ENCODE measurements at regions of chr2 and their contacts with region 1.

Region 1: DNA sequence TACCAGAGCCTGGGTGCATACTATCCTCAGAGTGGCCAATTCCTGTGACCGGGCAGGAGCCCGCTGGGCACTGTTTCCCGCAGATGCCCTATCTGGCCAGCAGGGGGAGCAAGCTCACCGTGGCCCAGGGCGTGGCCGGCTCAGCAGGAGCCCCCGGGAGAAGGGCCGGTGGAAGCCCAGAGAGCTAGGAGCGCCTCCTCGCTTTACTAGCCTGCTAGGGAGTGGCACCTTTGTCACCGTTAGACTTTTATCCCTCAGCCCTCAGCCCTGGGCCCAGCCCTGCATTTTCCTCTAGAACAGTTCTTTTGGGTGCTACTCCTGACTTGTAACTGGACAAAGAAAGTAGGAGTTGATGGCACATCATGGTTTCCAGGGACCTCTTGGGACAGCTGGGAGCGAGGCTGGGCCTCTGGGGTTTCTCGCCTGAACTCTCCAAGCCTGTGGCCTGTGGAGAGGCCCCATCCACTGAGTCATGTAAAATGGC is 24.0 kb downstream of the TMEM177 start:
- DNase-seq: no peak
- H3K4me3 ChIP-seq: no peak overlapping the region
- CTCF ChIP-seq: peak; percentile 99

Region 2: GRCh38 chr2:119617455-119617854 is 85.5 kb before region 1 on chr2:
- CTCF ChIA-PET with region 1: no interaction called
- POLR2A ChIA-PET with region 1: no interaction called
- DNase-seq: no peak
- H3K4me3 ChIP-seq: no peak overlapping the region
- CTCF ChIP-seq: no peak

Region 3: DNA sequence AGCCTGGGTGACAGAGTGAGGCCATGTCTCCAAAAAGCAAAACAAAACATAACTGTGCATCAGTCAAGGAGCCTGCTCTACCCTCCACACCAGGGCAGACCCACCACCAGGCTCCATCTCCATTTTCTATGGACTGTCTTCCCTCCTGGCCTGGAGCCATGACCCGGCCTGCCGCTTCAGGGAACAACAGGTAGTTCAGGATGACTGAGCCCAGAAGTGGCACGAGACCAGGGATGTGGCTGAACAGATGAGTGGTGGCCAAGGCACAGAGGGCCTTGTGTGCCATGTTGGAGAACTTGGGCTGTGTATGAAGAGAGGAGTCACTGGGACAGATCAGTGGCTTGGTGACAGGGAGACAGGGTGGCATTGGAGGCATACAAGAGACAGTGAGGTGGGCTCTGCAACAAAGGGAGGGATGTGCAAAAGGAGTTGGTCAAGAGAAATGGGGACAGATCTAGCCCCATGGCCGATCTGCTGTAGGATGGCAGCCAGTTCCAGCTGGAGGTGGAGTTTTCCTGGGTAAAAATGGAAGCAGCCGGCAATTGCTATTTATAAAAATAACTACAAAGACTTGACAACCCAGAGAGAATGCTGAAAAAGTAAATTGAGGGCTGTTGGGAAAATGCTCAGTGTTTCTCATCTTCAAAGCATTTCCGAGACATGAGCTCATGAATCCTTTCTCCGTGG is 11.0 kb after region 1 on chr2:
- CTCF ChIA-PET with region 1: interaction called, 27 read pairs
- POLR2A ChIA-PET with region 1: no interaction called
- DNase-seq: no peak
- H3K4me3 ChIP-seq: no peak overlapping the region
- CTCF ChIP-seq: no peak

Region 4: DNA sequence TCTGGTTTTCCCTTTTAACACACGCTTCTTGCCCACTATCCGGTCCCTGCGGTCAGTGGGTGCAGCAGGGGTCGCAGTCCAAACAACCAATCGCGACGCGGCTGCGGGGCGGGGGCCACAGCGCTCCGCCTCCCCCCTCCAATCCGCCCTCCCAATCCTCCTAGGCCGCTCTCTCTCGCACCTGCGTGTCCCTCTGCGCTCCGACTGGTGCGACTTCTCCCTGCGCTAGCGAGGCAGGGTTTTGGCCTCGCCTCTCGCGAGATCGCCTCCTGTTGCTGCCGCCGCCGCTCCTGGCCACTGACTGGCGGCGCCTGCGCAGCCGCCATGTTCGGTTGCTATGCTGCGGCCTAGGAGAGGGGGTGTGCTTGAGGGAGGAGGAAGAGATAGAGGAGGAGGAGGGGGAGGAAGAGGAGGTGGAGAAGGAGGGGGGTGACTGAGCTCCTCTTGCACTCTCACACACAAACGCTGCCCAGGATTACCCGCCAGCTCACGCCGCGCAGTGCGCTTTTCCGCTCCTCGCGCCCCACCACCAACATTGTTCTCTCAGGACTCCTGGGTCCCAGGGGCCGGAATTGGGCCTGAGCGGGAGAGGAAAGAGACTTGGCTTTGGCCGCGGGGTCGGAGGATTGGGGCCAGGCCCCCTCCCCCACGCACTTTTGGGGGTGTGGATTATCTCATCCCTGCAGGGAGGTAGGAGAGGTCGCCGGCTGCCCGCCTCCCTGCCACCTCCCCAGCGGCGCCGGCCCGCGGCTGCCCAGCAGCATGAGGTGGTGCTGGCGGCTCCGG is 56.7 kb after region 1 on chr2 and contains the start of gene PTPN4:
- CTCF ChIA-PET with region 1: no interaction called
- POLR2A ChIA-PET with region 1: no interaction called
- DNase-seq: peak; percentile 88
- H3K4me3 ChIP-seq: peak within 1 kb of the TSS; percentile 85
- CTCF ChIP-seq: no peak

Region 5: DNA sequence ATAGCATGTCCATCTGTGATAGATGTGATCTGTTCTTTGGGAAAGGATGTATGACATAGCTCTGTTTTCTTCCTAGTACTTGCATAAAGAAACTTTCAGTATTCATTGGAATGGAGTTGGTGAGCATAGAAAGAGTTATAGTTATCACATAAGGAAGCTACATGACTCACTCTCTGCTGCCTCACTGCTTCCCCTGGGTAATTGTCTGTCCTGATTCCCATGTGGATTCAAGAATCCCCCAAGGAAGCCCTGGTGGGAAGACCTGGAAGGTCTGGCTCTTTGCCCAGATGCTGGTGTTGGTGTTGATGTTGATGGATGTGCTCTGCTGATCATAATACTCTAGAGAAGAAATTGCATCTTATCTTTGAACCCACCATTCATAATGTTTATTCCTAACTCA is 117.3 kb after region 1 on chr2:
- CTCF ChIA-PET with region 1: interaction called, 56 read pairs
- POLR2A ChIA-PET with region 1: no interaction called
- DNase-seq: peak; percentile 74
- H3K4me3 ChIP-seq: no peak overlapping the region
- CTCF ChIP-seq: no peak

Measured in AG04449 (cell line).